ENCODE measurements at regions of chr9 and their contacts with region 1.

Region 1: GRCh38 chr9:109244157-109245132 is 76.4 kb downstream of the EPB41L4B start:
- DNase-seq: peak; percentile 79
- ATAC-seq: peak; percentile 81

Region 2: GRCh38 chr9:109289186-109289585 is 44.7 kb after region 1 on chr9:
- intact Hi-C with region 1: loop called (anchors 2 kb)
- DNase-seq: no peak
- ATAC-seq: no peak

Region 3: GRCh38 chr9:109311731-109312130 is 67.3 kb after region 1 on chr9:
- intact Hi-C with region 1: no loop called
- DNase-seq: no peak
- ATAC-seq: no peak

Region 4: GRCh38 chr9:109469646-109470358 is 225.4 kb after region 1 on chr9:
- intact Hi-C with region 1: loop called (anchors 5 kb)
- DNase-seq: no peak
- ATAC-seq: peak; percentile 73

Measured in Right ventricle myocardium inferior (tissue), 1 donor.